Activated naive CD4-positive, alpha-beta T cell treated with anti-CD3 and anti-CD28 coated beads, Interleukin-2, amount 10 ng/mL, durations not matched to agents 7 days and 5 days (primary cell): ENCODE measurements at regions of chr22 and their contacts with region 1.

Region 1: GRCh38 chr22:37199103-37199759 is 11.2 kb upstream of the C1QTNF6 start:
- DNase-seq: peak; percentile 99
- H3K4me3 Mint-ChIP-seq: peak overlapping the region; percentile 83
- H3K27ac Mint-ChIP-seq: peak overlapping the region; percentile 95
- H3K4me1 Mint-ChIP-seq: peaks cover 46% of the 10 kb centered on the region
- H3K27me3 Mint-ChIP-seq: no peaks in the 10 kb centered on the region

Region 2: GRCh38 chr22:37043828-37044538 is 155.2 kb before region 1 on chr22:
- CTCF ChIA-PET with region 1: interaction called, 15 read pairs
- DNase-seq: peak; percentile 74
- H3K4me3 Mint-ChIP-seq: no peak overlapping the region
- H3K27ac Mint-ChIP-seq: no peak overlapping the region
- H3K4me1 Mint-ChIP-seq: peaks cover 15% of the 10 kb centered on the region
- H3K27me3 Mint-ChIP-seq: peaks cover 26% of the 10 kb centered on the region

Region 3: GRCh38 chr22:37148742-37149665 is 50.2 kb before region 1 on chr22:
- CTCF ChIA-PET with region 1: interaction called, 12 read pairs
- DNase-seq: no peak
- H3K4me3 Mint-ChIP-seq: peak overlapping the region; percentile 88
- H3K27ac Mint-ChIP-seq: peak overlapping the region; percentile 93
- H3K4me1 Mint-ChIP-seq: peaks cover 64% of the 10 kb centered on the region
- H3K27me3 Mint-ChIP-seq: no peaks in the 10 kb centered on the region

Region 4: GRCh38 chr22:37218771-37219411 is 19.7 kb after region 1 on chr22:
- CTCF ChIA-PET with region 1: interaction called, 17 read pairs
- DNase-seq: peak; percentile 90
- H3K4me3 Mint-ChIP-seq: peak overlapping the region; percentile 77
- H3K27ac Mint-ChIP-seq: peak overlapping the region; percentile 96
- H3K4me1 Mint-ChIP-seq: peaks cover 85% of the 10 kb centered on the region
- H3K27me3 Mint-ChIP-seq: no peaks in the 10 kb centered on the region

Region 5: DNA sequence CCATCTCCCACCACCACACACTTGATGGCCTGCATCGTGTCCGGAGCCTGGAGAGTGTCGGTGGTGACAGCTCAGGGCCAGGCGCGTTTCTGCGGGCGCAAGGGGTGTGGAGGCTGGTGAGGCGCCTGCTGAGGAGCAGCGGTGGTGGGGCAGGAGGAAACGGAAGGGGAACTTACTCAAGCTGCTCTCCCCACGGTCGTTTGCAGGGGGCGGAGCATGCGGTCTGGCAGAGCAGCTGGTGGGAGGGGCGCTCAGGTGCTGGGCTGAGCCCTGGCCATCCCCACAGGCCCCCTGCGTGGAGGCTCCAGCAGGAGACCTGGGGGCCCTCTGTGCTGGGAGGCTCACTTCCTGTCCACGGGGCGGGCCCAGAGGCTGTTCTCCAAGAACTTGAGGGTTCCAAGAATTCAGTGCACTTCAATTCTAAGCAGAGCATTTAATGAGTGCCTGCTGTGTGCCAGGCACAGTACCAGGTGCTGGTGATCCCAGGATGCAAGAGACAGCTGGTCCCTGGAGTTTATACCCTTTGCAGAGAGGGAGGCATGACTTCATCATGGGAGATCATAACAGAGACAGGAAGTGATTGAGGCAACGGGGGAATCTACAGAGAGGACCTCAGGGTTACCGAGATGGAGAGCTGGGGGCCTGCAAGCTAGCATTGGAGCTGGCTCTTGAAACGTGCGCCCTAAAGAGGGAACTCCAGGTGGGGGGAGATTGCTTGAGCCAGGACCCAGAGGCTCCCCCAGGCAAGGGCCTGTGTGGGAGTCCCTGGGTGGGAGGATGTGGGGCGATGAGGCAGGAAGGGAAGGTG is 45.1 kb after region 1 on chr22 and contains the start of gene RAC2:
- CTCF ChIA-PET with region 1: interaction called, 10 read pairs
- DNase-seq: peak; percentile 96
- H3K4me3 Mint-ChIP-seq: peak within 1 kb of the TSS; percentile 100
- H3K27ac Mint-ChIP-seq: peak within 1 kb of the TSS; percentile 94
- H3K4me1 Mint-ChIP-seq: peaks cover 48% of the 10 kb centered on the region
- H3K27me3 Mint-ChIP-seq: peaks cover 9% of the 10 kb centered on the region